Aorta (tissue), 5 donors: ENCODE measurements at regions of chr1 and their contacts with region 1.

Region 1: DNA sequence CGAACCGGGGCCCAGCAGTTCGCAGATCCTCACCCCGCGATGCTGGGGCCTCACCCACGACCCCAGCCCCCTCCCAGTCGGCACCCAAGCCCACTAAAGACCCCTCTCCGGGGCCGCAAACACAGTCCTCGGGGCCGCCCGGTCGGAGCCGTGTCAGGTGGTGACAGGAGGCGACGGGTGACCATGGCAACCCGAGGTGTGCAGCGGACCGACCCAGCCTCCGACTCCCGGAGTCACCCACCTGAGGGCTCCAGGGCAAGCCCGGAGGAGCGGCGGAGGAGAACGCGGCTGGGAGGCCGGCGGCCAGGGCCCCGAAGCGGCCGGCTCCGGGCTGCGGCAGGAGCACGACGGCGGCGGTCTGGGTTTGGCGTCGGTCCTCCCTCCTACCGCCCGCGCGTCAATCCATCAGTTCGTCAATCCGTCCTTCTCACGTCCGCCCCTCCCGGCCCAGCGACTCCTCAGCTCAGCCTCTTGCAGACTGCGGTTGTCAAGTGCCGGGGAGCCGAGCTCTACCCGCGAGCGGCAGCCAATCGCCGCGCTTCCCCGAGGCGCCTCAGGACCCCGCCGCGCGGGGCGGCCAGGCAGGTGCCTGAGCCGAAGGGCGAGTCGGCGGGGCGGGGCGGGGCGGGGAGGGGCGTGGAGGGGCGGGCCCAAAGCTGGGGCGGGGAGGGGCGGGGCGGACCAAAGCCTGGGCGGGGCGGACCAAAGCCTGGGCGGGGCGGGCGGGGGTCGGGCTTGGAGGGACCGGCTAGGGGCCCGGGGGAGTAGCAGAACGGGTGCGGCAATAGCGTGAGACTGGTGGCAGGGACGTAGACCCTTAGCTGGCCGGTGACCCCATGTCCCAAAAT is at the start of gene WDR47:
- DNase-seq: peak; percentile 97
- ATAC-seq: peak; percentile 97
- H3K4me3 ChIP-seq: peak within 1 kb of the TSS; percentile 66 to 88
- H3K27ac ChIP-seq: peak within 1 kb of the TSS; percentile 19 to 44
- H3K4me1 ChIP-seq: no peaks in the 10 kb centered on the region
- H3K27me3 ChIP-seq: no peaks in the 10 kb centered on the region
- total RNA-seq, gene WDR47: 20.2 to 24.1 TPM

Region 2: DNA sequence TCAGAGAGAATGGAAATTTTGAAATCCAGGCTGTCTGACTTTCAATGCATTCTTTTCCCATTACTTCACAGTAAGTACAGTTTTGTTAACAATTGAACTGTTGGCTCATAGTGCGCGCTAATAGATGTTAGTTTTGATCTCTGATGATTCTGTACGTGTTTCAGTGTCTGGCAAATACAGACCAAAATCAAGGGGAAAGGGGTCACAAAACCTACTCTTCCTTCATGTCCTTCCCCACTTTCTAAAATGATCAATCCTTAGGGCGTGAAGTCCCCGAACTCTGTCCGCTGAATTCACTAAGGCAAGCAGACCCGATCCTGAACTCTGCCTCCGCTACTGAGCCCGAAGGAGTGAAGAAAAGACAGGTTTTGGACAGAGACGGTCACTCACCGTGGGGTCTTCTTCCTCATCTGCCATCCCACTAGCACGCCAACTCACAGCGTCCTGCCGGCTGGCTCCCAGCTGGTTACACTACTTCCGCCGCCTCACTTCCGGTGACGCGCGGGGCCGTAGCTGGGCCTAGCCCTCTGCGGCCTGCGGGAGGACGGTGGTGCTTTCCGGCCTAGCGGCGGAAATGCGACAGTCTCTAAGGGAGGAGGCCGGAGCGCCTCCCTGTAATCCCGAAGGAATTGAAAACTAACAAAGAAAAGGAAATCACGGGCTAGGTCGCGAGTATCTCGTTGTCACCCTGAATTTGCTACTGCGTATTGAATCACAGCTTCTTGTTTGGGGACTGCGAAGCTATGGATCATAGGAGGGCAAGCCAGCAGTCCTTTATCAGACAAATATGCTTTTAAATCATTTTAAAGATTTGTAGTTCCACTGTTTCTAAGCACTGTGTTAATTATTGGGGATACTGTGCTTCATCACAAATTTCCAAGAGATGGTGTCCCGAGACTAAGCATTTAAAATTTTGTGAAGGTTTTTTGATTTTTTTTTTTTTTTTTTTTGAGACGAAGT is 34.0 kb after region 1 on chr1 and contains the start of gene TAF13:
- intact Hi-C with region 1: loop called in 1 of 2 experiments (anchors 5 kb)
- DNase-seq: peak; percentile 97 to 98
- ATAC-seq: peak; percentile 100
- H3K4me3 ChIP-seq: peak within 1 kb of the TSS; percentile 96 to 98
- H3K27ac ChIP-seq: peak within 1 kb of the TSS; percentile 30 to 99
- H3K4me1 ChIP-seq: no peaks in the 10 kb centered on the region
- H3K27me3 ChIP-seq: no peaks in the 10 kb centered on the region
- total RNA-seq, gene TAF13: 40.7 to 71.2 TPM

Region 3: GRCh38 chr1:109090196-109091077 is 48.6 kb after region 1 on chr1 and contains the start of gene TMEM167B:
- intact Hi-C with region 1: loop called in 1 of 2 experiments (anchors 5 kb)
- DNase-seq: peak; percentile 95
- ATAC-seq: peak; percentile 96
- H3K4me3 ChIP-seq: peak within 1 kb of the TSS; percentile 61 to 72
- H3K27ac ChIP-seq: peak within 1 kb of the TSS; percentile 46 to 90
- H3K4me1 ChIP-seq: peaks cover 0 to 3% of the 10 kb centered on the region in 2 donors
- H3K27me3 ChIP-seq: no peaks in the 10 kb centered on the region
- total RNA-seq, gene TMEM167B: 42.2 to 43.2 TPM

Region 4: GRCh38 chr1:109099938-109100773 is 58.3 kb after region 1 on chr1:
- intact Hi-C with region 1: loop called in 1 of 2 experiments (anchors 2 kb)
- DNase-seq: peak; percentile 98 to 99
- ATAC-seq: peak; percentile 98
- H3K4me3 ChIP-seq: peak overlapping the region; percentile 56 to 69
- H3K27ac ChIP-seq: peak overlapping the region; percentile 62 to 72
- H3K4me1 ChIP-seq: peaks cover 0 to 2% of the 10 kb centered on the region in 2 donors
- H3K27me3 ChIP-seq: no peaks in the 10 kb centered on the region